GM12878 (cell line): ENCODE measurements at regions of chr1 and their contacts with region 1.

Region 1: GRCh38 chr1:108758796-108759195 is 12.3 kb downstream of the STXBP3 start:
- DNase-seq: no peak
- ATAC-seq: no peak
- H3K4me3 ChIP-seq: no peak overlapping the region
- H3K27ac ChIP-seq: no peak overlapping the region
- H3K4me1 ChIP-seq: no peaks in the 10 kb centered on the region
- H3K27me3 ChIP-seq: no peaks in the 10 kb centered on the region
- CTCF ChIP-seq: no peak
- EP300 ChIP-seq: no peak
- POLR2A ChIP-seq: no peak
- RAD21 ChIP-seq: no peak

Region 2: DNA sequence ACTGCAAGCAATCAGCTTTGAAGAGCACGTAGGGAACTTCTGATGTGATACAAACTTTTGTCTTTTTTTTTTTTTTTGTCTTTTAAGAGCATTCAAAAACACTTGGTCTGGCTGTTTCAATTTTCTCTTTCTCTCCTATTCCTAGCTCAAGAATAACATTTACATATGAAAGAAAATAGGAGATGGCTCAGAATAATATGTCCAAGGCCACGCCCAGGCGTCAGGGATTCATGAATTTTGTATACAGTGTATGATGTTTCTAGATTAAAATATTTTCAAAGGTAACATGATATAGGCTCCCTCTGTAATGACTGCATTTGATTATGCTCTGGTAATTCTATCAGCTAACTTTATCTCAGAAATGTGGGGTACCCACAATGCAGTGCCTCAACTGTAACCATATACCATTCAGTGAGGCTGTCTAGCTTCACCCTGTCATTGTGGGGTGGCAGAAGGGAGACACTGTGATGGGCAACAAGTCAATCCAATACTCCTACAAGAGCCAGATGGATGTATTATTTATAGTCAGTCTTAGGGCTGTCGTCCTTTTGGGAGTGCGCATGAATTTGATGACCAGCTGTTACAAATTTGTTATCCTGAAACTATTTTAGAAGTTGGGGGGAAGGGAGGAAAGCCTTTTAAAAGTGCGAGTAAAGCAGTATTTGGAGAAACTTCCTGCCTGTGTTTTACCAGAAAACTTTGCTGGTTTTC is 99.6 kb after region 1 on chr1:
- CTCF ChIA-PET with region 1: no interaction called
- POLR2A ChIA-PET with region 1: no interaction called
- RAD21 ChIA-PET with region 1: no interaction called
- SMC1A ChIA-PET with region 1: no interaction called
- in situ Hi-C with region 1: no loop called
- intact Hi-C with region 1: no loop called
- DNase-seq: no peak
- ATAC-seq: no peak
- H3K4me3 ChIP-seq: no peak overlapping the region
- H3K27ac ChIP-seq: no peak overlapping the region
- H3K4me1 ChIP-seq: peaks cover 5% of the 10 kb centered on the region; the same call in 1 of the 2 replicates
- H3K27me3 ChIP-seq: no peaks in the 10 kb centered on the region; a peak in 2 of 4 replicates
- CTCF ChIP-seq: no peak
- EP300 ChIP-seq: no peak
- POLR2A ChIP-seq: no peak
- RAD21 ChIP-seq: no peak

Region 3: GRCh38 chr1:108877348-108878159 is 118.8 kb after region 1 on chr1:
- CTCF ChIA-PET with region 1: no interaction called
- POLR2A ChIA-PET with region 1: no interaction called
- RAD21 ChIA-PET with region 1: no interaction called
- SMC1A ChIA-PET with region 1: no interaction called
- in situ Hi-C with region 1: no loop called
- intact Hi-C with region 1: loop called (anchors 5 kb)
- DNase-seq: no peak
- ATAC-seq: peak; percentile 7; the same call in 2 of the 3 replicates
- H3K4me3 ChIP-seq: peak overlapping the region; percentile 73
- H3K27ac ChIP-seq: peak overlapping the region; percentile 61
- H3K4me1 ChIP-seq: no peaks in the 10 kb centered on the region
- H3K27me3 ChIP-seq: no peaks in the 10 kb centered on the region
- CTCF ChIP-seq: no peak
- EP300 ChIP-seq: no peak
- POLR2A ChIP-seq: no peak
- RAD21 ChIP-seq: no peak